ENCODE measurements at regions of chr15 and their contacts with region 1.

Region 1: GRCh38 chr15:89171136-89172072 is 50.0 kb downstream of the RLBP1 start:
- DNase-seq: peak; percentile 37
- CTCF ChIP-seq: peak; percentile 25

Region 2: GRCh38 chr15:89057504-89058133 is 113.8 kb before region 1 on chr15:
- in situ Hi-C with region 1: loop called (anchors 5 kb)
- DNase-seq: peak; percentile 84
- CTCF ChIP-seq: peak; percentile 97

Region 3: GRCh38 chr15:89812011-89812835 is 640.8 kb after region 1 on chr15:
- in situ Hi-C with region 1: no loop called
- DNase-seq: peak; percentile 43
- CTCF ChIP-seq: no peak

Measured in GM13976 (cell line).